PC-9 (cell line): ENCODE measurements at regions of chr11 and their contacts with region 1.

Region 1: GRCh38 chr11:94511932-94512781 is at the start of gene C11orf97:
- DNase-seq: peak; percentile 48 to 59
- H3K4me3 ChIP-seq: peak within 1 kb of the TSS; percentile 61
- H3K27ac ChIP-seq: no peak within 1 kb of the TSS
- H3K4me1 ChIP-seq: peaks cover 16% of the 10 kb centered on the region
- H3K27me3 ChIP-seq: no peaks in the 10 kb centered on the region
- CTCF ChIP-seq: no peak
- total RNA-seq, gene C11orf97: not detected in 2 replicates

Region 2: DNA sequence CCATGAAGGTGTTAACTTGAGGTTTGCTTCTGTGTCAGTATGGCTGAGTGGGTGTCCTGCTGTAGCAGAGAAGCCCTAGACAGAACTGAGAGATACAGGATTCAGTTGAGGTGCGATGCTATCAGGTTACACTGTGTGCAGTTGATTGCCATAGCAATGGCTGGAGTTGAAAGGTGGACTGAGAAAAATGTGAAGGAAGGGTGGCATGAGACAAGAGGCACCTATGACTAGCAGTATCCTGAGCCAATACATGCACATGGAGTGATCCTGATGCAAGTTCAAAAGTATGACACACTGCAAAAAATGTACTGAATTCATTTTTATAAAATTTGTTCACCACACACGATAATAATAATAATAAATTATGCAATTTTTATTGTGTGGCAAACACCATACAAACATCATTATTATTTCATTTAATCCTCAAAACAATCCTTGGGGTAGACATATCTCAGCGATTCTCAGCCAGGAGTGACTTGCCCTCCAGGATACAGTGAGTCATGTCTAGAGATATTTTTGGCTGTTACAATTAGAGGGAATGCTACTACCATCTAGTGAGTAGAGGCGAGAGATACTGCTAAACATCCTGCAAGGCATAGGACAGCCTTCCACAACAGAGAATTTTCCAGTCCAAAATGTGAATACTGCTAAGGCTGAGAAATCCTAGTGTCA is 51.2 kb after region 1 on chr11:
- CTCF ChIA-PET with region 1: no interaction called
- POLR2A ChIA-PET with region 1: interaction called, 12 read pairs
- intact Hi-C with region 1: no loop called
- DNase-seq: peak in 1 of 2 experiments; percentile 59
- H3K4me3 ChIP-seq: no peak overlapping the region
- H3K27ac ChIP-seq: no peak overlapping the region
- H3K4me1 ChIP-seq: 0 out of 2 replicates have a peak, but pooled peaks cover 6% of the 10 kb centered on the region
- H3K27me3 ChIP-seq: no peaks in the 10 kb centered on the region
- CTCF ChIP-seq: no peak

Region 3: GRCh38 chr11:94750319-94751218 is 238.4 kb after region 1 on chr11:
- CTCF ChIA-PET with region 1: no interaction called
- POLR2A ChIA-PET with region 1: no interaction called
- intact Hi-C with region 1: no loop called
- DNase-seq: no peak
- H3K4me3 ChIP-seq: no peak overlapping the region
- H3K27ac ChIP-seq: peak overlapping the region; percentile 99
- H3K4me1 ChIP-seq: peaks cover 89% of the 10 kb centered on the region
- H3K27me3 ChIP-seq: no peaks in the 10 kb centered on the region
- CTCF ChIP-seq: no peak

Region 4: GRCh38 chr11:94885133-94885532 is 373.0 kb after region 1 on chr11:
- CTCF ChIA-PET with region 1: no interaction called
- POLR2A ChIA-PET with region 1: no interaction called
- intact Hi-C with region 1: loop called (anchors 10 kb)
- DNase-seq: peak; percentile 20 to 79
- H3K4me3 ChIP-seq: no peak overlapping the region
- H3K27ac ChIP-seq: no peak overlapping the region
- H3K4me1 ChIP-seq: peaks cover 24% of the 10 kb centered on the region
- H3K27me3 ChIP-seq: no peaks in the 10 kb centered on the region
- CTCF ChIP-seq: no peak